ENCODE measurements at regions of chr4 and their contacts with region 1.

Region 1: DNA sequence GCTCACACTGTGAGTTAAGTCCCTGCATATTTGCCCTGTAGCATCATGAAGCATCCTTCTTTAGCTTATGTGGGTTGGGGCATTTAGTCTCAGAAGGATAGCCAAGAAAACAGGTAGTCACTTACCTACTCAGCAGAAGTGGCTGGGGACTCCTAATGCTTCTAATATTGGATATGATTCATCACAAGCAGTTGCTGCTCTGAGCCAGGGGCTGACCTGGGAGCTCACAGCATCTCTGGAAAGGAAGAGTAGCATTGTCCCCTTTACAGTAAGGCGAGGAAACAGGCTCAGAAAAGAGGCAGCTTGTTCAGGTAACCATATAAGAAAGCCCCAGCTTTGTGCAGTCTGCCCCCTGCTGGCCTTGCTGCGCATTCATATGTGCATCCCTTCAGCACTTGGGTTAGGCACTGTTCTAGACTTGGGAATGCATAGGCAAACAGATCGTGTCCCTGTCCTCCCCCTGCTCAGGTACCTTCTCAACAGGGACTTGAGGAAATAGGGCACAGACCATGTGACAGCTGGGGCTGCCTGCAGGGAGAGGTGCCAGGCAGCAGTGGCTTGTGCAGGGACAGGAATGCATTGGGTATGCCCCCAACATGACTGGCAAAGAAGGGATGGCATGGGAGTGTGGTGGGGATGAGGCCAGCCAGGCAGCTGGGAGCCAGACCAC is 35.7 kb upstream of the TBC1D14 start:
- DNase-seq: peak; percentile 65
- H3K4me3 Mint-ChIP-seq: no peak overlapping the region
- H3K27ac Mint-ChIP-seq: no peak overlapping the region
- H3K4me1 Mint-ChIP-seq: no peaks in the 10 kb centered on the region
- H3K27me3 Mint-ChIP-seq: no peaks in the 10 kb centered on the region
- CTCF ChIP-seq: peak; percentile 88

Region 2: GRCh38 chr4:6673660-6674499 is 200.0 kb before region 1 on chr4:
- CTCF ChIA-PET with region 1: interaction called, 18 read pairs
- POLR2A ChIA-PET with region 1: interaction called, 13 read pairs
- intact Hi-C with region 1: loop called (anchors 1 kb)
- DNase-seq: peak; percentile 93
- H3K4me3 Mint-ChIP-seq: peak overlapping the region; percentile 88
- H3K27ac Mint-ChIP-seq: peak overlapping the region; percentile 71
- H3K4me1 Mint-ChIP-seq: peaks cover 22% of the 10 kb centered on the region
- H3K27me3 Mint-ChIP-seq: no peaks in the 10 kb centered on the region
- CTCF ChIP-seq: no peak

Region 3: DNA sequence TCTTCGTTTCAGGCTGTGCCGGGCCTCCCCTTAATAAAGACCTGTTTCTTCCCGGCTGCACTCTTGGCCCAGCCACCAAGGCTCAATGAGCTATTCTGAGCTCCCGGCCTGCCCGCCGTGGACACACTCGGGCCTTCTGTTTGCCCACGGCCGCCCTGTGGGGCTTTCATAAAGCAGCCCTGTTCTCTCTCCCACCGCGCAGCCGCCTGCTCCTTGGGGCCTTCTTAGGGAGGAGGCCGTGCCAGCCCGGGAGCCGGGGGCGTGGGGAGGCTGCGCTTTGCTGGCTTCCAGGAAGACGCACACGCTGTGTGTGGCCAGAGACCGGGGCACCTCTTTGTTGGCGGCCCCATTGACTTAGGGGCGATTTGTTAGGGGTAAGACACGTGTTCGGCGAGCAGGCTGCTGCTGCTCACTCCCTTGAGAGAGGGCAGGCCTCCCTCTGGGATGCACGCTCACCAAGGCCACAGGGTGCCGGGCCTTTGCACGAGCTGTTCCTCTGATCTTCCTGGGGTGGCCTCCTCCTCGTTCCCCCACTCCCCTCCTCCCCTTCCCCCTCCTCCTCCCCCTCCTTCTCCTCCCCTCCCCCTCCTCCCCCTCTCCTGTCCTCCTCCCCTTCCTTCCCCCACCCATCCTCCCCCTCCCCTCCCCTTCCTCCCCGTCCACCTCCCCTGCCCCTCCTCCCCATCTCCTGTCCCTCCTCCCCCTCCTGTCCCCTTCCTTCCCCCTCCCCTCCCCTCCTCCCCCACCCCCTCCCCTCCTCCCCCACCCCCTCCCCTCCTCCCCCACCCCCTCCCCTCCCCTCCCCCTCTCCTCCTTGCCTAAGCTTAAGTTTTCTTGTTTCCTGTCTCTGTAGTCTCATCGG is 146.6 kb before region 1 on chr4:
- CTCF ChIA-PET with region 1: interaction called, 208 read pairs
- POLR2A ChIA-PET with region 1: interaction called, 3 read pairs
- intact Hi-C with region 1: no loop called
- DNase-seq: no peak
- H3K4me3 Mint-ChIP-seq: no peak overlapping the region
- H3K27ac Mint-ChIP-seq: no peak overlapping the region
- H3K4me1 Mint-ChIP-seq: peaks cover under 1% of the 10 kb centered on the region
- H3K27me3 Mint-ChIP-seq: no peaks in the 10 kb centered on the region
- CTCF ChIP-seq: no peak

Region 4: DNA sequence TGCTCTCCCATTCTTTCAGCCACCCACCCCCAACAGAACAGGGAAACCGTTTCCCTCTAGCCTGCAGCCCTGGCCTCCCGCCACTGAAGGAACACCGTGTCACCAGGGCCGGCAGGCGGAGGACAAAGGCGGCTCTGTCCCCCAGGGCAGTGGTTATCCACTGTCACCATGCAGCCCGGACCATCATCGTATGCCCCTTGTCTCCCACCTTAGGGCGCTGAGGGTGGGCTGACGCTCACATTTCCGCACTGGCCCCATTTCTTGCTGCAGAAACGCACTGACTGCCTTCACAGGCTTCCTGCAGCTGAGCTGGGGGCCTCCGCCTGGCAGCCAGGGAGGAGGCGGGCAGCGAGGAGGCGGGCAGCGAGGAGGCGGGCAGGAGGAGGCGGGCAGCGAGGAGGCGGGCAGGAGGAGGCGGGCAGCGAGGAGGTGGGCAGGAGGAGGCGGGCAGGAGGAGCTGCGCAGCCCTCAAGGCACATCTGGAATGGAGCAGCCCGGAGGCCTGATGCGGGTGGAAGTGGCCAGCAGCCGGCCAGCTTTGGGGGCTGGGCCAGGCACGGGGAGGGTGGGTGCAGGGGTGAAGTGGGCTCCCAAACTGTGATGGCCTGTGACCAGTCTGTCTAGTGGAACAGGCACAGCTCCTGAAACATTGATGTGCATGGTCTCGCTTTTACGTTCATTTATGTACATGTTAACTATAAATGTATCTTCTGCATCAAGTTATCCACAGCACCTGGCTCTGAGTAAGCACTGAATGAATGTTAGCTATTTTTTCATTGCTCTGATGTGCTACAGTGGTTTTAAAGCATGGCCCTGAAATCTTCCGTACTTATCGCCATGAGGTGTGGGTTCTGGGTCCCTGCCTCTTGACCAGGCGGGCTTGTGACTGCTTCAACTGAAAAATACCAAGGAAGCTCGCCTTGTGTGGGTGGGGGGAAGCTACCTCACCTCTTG is 112.0 kb before region 1 on chr4:
- CTCF ChIA-PET with region 1: interaction called, 25 read pairs
- POLR2A ChIA-PET with region 1: no interaction called
- intact Hi-C with region 1: no loop called
- DNase-seq: no peak
- H3K4me3 Mint-ChIP-seq: no peak overlapping the region
- H3K27ac Mint-ChIP-seq: no peak overlapping the region
- H3K4me1 Mint-ChIP-seq: peaks cover 25% of the 10 kb centered on the region
- H3K27me3 Mint-ChIP-seq: no peaks in the 10 kb centered on the region
- CTCF ChIP-seq: no peak

Region 5: GRCh38 chr4:6783053-6783981 is 90.6 kb before region 1 on chr4:
- CTCF ChIA-PET with region 1: interaction called, 23 read pairs
- POLR2A ChIA-PET with region 1: interaction called, 4 read pairs
- intact Hi-C with region 1: loop called (anchors 1 kb)
- DNase-seq: peak; percentile 88
- H3K4me3 Mint-ChIP-seq: peak overlapping the region; percentile 78
- H3K27ac Mint-ChIP-seq: no peak overlapping the region
- H3K4me1 Mint-ChIP-seq: peaks cover 22% of the 10 kb centered on the region
- H3K27me3 Mint-ChIP-seq: no peaks in the 10 kb centered on the region
- CTCF ChIP-seq: no peak

Region 6: DNA sequence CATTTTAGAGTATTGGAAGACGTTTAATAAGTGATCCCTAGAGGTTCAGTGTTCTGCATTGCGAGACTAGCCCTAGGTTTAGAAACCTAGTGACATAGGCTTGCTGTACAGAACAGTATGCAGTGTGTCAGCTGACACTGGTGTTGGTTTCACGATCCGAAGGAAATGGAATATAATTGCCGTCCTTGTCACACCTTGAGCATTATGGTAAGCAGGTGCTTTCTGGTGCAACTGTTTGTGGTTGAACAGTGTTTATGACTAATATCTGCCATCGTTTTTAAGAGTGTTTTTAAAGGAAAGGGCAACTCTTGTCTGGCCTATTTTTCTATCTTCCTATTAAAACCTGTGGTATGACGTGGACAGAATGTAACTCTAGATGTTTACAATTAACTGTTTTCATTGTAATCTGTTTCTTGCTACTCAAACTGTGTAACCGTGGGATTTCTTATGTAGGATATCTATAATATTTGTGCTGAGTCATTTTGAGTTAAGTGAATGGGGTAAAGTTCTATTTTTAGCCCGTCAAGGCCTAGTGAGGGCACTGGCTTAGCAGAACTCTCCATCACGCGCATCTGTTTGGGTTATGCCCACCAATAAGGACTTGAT is 18.1 kb before region 1 on chr4:
- CTCF ChIA-PET with region 1: interaction called, 14 read pairs
- POLR2A ChIA-PET with region 1: no interaction called
- intact Hi-C with region 1: no loop called
- DNase-seq: peak; percentile 53
- H3K4me3 Mint-ChIP-seq: no peak overlapping the region
- H3K27ac Mint-ChIP-seq: no peak overlapping the region
- H3K4me1 Mint-ChIP-seq: peaks cover 10% of the 10 kb centered on the region
- H3K27me3 Mint-ChIP-seq: no peaks in the 10 kb centered on the region
- CTCF ChIP-seq: no peak

Region 7: GRCh38 chr4:6898763-6899162 is 24.8 kb after region 1 on chr4:
- CTCF ChIA-PET with region 1: interaction called, 10 read pairs
- POLR2A ChIA-PET with region 1: no interaction called
- intact Hi-C with region 1: no loop called
- DNase-seq: no peak
- H3K4me3 Mint-ChIP-seq: no peak overlapping the region
- H3K27ac Mint-ChIP-seq: no peak overlapping the region
- H3K4me1 Mint-ChIP-seq: no peaks in the 10 kb centered on the region
- H3K27me3 Mint-ChIP-seq: no peaks in the 10 kb centered on the region
- CTCF ChIP-seq: no peak